GM10248 (cell line): ENCODE measurements at regions of chr10 and their contacts with region 1.

Region 1: GRCh38 chr10:16663444-16663843 is 141.8 kb upstream of the C1QL3 start:
- DNase-seq: no peak
- CTCF ChIP-seq: no peak

Region 2: GRCh38 chr10:16653224-16653623 is 10.2 kb before region 1 on chr10:
- CTCF ChIA-PET with region 1: no interaction called
- POLR2A ChIA-PET with region 1: interaction called, 13 read pairs
- DNase-seq: no peak
- CTCF ChIP-seq: no peak

Region 3: DNA sequence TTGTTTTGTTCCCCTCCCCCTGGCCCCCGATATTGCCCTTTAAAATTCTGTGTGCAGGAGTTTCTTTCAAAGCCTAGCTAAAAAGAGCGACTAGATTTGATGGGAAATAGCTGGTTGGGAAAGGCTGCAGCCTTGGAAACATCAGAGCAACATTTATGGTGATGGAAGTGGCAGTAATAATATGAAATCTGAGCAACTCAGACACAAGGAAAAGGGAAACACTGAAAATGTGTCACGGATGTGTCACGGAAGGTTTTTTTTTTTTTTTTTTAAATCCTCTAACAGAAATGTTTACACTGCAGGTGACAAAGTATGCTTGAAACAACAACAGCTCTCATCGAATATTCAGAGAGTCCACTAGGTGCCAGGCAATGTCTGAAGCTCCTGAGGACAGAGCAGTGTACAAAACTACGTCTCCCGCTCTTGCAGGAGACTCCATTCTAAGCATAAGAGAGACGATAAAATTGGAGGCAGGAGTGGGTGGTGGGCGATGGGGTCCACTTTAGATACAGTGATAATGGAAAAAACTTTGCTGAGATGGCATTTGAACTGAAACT is 10.8 kb after region 1 on chr10:
- CTCF ChIA-PET with region 1: no interaction called
- POLR2A ChIA-PET with region 1: no interaction called
- DNase-seq: no peak
- CTCF ChIP-seq: no peak